ENCODE measurements at regions of chr15 and their contacts with region 1.

Region 1: GRCh38 chr15:83248151-83249029 is 36.1 kb downstream of the BNC1 start:
- DNase-seq: peak; percentile 6 to 49 (median 28)
- H3K4me3 ChIP-seq: no peak overlapping the region
- H3K4me3 Mint-ChIP-seq: no peak overlapping the region
- H3K27ac ChIP-seq: no peak overlapping the region
- H3K27ac Mint-ChIP-seq: peak overlapping the region in 1 of 7 donors; percentile 29
- H3K4me1 ChIP-seq: no peaks in the 10 kb centered on the region
- H3K4me1 Mint-ChIP-seq: no peaks in the 10 kb centered on the region
- H3K27me3 ChIP-seq: peaks cover 2 to 6% of the 10 kb centered on the region in 2 donors
- H3K27me3 Mint-ChIP-seq: peaks cover 7 to 42% (median 20%) of the 10 kb centered on the region in 3 donors
- CTCF ChIP-seq: peak; percentile 99

Region 2: GRCh38 chr15:83127648-83128047 is 120.7 kb before region 1 on chr15:
- intact Hi-C with region 1: no loop called
- DNase-seq: no peak
- H3K4me3 ChIP-seq: no peak overlapping the region
- H3K4me3 Mint-ChIP-seq: no peak overlapping the region
- H3K27ac ChIP-seq: no peak overlapping the region
- H3K27ac Mint-ChIP-seq: no peak overlapping the region
- H3K4me1 ChIP-seq: no peaks in the 10 kb centered on the region
- H3K4me1 Mint-ChIP-seq: no peaks in the 10 kb centered on the region
- H3K27me3 ChIP-seq: no peaks in the 10 kb centered on the region
- H3K27me3 Mint-ChIP-seq: peaks cover 0 to 5% (median 0%) of the 10 kb centered on the region in 3 donors
- CTCF ChIP-seq: no peak

Region 3: DNA sequence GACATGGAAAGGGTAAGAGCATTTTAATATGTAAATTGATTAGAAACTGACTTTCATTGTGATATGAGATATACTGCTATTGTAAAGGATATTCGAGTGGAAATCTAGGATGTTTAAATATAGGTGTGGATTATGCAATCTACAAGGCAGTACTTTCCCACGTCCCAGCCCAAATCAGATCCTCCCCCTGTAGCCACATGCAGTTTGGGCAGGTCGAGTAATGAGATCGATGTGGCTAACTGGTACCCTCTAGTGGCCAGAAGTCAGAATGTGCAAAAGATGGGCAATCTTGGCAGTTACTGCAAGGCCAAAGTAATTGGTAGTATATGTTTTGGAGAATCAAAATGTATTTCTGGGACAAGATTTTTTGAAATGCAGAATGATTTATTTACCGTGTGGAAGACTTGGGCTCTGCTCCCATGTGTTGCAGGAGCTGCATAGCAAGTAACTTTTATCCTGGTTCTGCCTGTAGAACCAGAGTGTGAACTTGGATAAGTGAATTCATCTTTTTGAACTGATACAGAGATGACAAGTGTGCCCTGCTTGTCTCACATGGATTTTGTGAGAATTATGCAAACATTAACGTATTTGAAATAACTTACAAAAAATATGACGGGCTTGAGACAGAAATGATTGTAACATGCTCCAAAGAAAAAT is 311.0 kb after region 1 on chr15:
- intact Hi-C with region 1: loop called in 1 of 2 experiments (anchors 5 kb)
- DNase-seq: peak in 2 of 3 donors; percentile 10 to 25
- H3K4me3 ChIP-seq: no peak overlapping the region
- H3K4me3 Mint-ChIP-seq: no peak overlapping the region
- H3K27ac ChIP-seq: no peak overlapping the region
- H3K27ac Mint-ChIP-seq: peak overlapping the region in 1 of 7 donors; percentile 16
- H3K4me1 ChIP-seq: no peaks in the 10 kb centered on the region
- H3K4me1 Mint-ChIP-seq: no peaks in the 10 kb centered on the region
- H3K27me3 ChIP-seq: no peaks in the 10 kb centered on the region
- H3K27me3 Mint-ChIP-seq: peaks cover 5 to 8% (median 5%) of the 10 kb centered on the region in 3 donors
- CTCF ChIP-seq: peak; percentile 80